ENCODE measurements at regions of chr16 and their contacts with region 1.

Region 1: GRCh38 chr16:16021988-16022682 is 72.7 kb downstream of the ABCC1 start:
- DNase-seq: peak; percentile 93
- H3K4me3 ChIP-seq: no peak overlapping the region
- H3K27ac ChIP-seq: peak overlapping the region; percentile 74 to 83 (median 80)
- H3K4me1 ChIP-seq: peaks cover 20 to 37% (median 28%) of the 10 kb centered on the region in 4 donors
- H3K27me3 ChIP-seq: no peaks in the 10 kb centered on the region
- CTCF ChIP-seq: no peak
- EP300 ChIP-seq: no peak
- POLR2A ChIP-seq: no peak

Region 2: GRCh38 chr16:15888072-15888976 is 133.8 kb before region 1 on chr16 and contains the start of gene CEP20:
- in situ Hi-C with region 1: loop called in 1 of 4 experiments (anchors 10 kb)
- intact Hi-C with region 1: no loop called
- DNase-seq: peak; percentile 100
- H3K4me3 ChIP-seq: peak within 1 kb of the TSS; percentile 72 to 98 (median 84)
- H3K27ac ChIP-seq: peak within 1 kb of the TSS; percentile 85 to 94 (median 90)
- H3K4me1 ChIP-seq: peaks cover 12 to 29% (median 18%) of the 10 kb centered on the region in 4 donors
- H3K27me3 ChIP-seq: no peaks in the 10 kb centered on the region
- CTCF ChIP-seq: peak in 4 of 5 experiments; percentile 23 to 76 (median 50)
- EP300 ChIP-seq: no peak
- POLR2A ChIP-seq: peak; percentile 82
- total RNA-seq, gene CEP20: 9.4 to 21.7 (median 20.8) TPM